Panc1 (cell line): ENCODE measurements at regions of chr22 and their contacts with region 1.

Region 1: GRCh38 chr22:24325105-24325757 is 54.6 kb downstream of the SPECC1L start:
- DNase-seq: no peak
- ATAC-seq: 0 out of 2 replicates have a peak, but pooled peaks have one; percentile 68
- H3K4me3 ChIP-seq: no peak overlapping the region
- H3K27ac ChIP-seq: no peak overlapping the region
- H3K4me1 ChIP-seq: no peaks in the 10 kb centered on the region
- H3K27me3 ChIP-seq: no peaks in the 10 kb centered on the region
- CTCF ChIP-seq: peak; percentile 59; the same call in 1 of the 2 replicates

Region 2: GRCh38 chr22:23750714-23751440 is 574.4 kb before region 1 on chr22 and contains the start of gene ZNF70:
- CTCF ChIA-PET with region 1: no interaction called
- POLR2A ChIA-PET with region 1: interaction called, 11 read pairs
- in situ Hi-C with region 1: no loop called
- intact Hi-C with region 1: no loop called
- DNase-seq: no peak
- ATAC-seq: peak; percentile 99
- H3K4me3 ChIP-seq: peak within 1 kb of the TSS; percentile 69 to 73
- H3K27ac ChIP-seq: peak within 1 kb of the TSS; percentile 82
- H3K4me1 ChIP-seq: peaks cover 6% of the 10 kb centered on the region
- H3K27me3 ChIP-seq: no peaks in the 10 kb centered on the region
- CTCF ChIP-seq: no peak; the same call in 1 of the 2 replicates
- total RNA-seq, gene ZNF70: 3.2 TPM

Region 3: GRCh38 chr22:24358105-24358836 is 33.0 kb after region 1 on chr22:
- CTCF ChIA-PET with region 1: no interaction called
- POLR2A ChIA-PET with region 1: interaction called, 10 read pairs
- in situ Hi-C with region 1: no loop called
- intact Hi-C with region 1: no loop called
- DNase-seq: no peak
- ATAC-seq: no peak
- H3K4me3 ChIP-seq: no peak overlapping the region
- H3K27ac ChIP-seq: no peak overlapping the region
- H3K4me1 ChIP-seq: no peaks in the 10 kb centered on the region; the same call in 1 of the 2 replicates
- H3K27me3 ChIP-seq: no peaks in the 10 kb centered on the region
- CTCF ChIP-seq: no peak

Region 4: GRCh38 chr22:24525416-24526037 is 200.3 kb after region 1 on chr22:
- CTCF ChIA-PET with region 1: no interaction called
- POLR2A ChIA-PET with region 1: no interaction called
- in situ Hi-C with region 1: no loop called
- intact Hi-C with region 1: loop called (anchors 10 kb)
- DNase-seq: peak; percentile 58
- ATAC-seq: peak; percentile 85
- H3K4me3 ChIP-seq: no peak overlapping the region
- H3K27ac ChIP-seq: no peak overlapping the region
- H3K4me1 ChIP-seq: no peaks in the 10 kb centered on the region; the same call in 1 of the 2 replicates
- H3K27me3 ChIP-seq: no peaks in the 10 kb centered on the region
- CTCF ChIP-seq: peak; percentile 86